PC-3 (cell line): ENCODE measurements at regions of chr1 and their contacts with region 1.

Region 1: DNA sequence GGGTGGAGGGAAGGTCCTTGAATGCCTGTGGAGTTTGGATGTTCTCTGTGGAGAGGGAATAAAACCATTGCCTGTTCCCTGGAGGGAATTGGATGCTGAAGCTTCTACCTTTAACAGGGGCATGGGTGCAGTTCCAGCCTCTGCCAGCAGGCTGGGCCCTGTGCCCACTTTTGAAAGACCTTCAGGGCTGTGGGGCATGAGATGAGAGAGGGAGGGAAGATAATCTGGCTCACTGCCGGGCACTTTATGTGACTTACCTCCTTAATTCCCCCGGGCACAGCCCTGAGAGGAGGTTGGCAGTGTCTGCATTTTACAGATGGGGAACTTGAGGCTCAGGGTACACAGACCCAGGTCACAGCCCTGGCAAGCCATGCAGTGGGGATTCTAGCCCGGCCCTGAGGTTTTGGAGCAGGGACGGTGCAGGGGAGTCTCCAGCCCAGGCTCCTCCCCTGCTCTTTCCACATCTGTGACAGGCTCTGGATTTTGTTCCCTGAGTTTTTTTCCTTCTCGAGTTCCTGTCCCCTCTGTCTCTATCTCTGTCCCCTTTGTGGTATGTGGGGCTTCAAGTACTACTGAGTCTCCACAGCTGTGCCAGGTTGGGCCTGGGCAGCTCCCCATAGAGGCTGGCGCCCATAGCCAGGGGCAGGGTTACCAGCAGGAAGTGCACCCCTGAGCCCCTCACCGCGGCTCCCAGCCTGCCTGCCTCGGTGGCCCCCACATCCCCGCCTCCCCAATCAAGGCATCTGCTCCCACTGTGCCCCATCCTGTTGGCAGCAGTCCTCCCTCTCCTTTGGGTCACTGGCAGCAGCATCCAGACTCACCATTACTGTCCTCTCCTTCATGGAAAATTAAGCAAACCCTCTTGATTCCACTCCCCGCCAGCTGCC is 14.0 kb upstream of the THEMIS2 start:
- DNase-seq: peak; percentile 95
- ATAC-seq: peak; percentile 91
- H3K4me3 ChIP-seq: no peak overlapping the region
- H3K27ac ChIP-seq: no peak overlapping the region
- H3K4me1 ChIP-seq: peaks cover 16% of the 10 kb centered on the region
- H3K27me3 ChIP-seq: no peaks in the 10 kb centered on the region
- CTCF ChIP-seq: peak; percentile 98

Region 2: GRCh38 chr1:27872059-27872801 is 13.9 kb after region 1 on chr1 and contains the start of gene THEMIS2:
- CTCF ChIA-PET with region 1: interaction called, 3 read pairs
- POLR2A ChIA-PET with region 1: no interaction called
- intact Hi-C with region 1: loop called (anchors 1 kb)
- DNase-seq: peak; percentile 23
- ATAC-seq: peak; percentile 42
- H3K4me3 ChIP-seq: peak within 1 kb of the TSS; percentile 67
- H3K27ac ChIP-seq: no peak within 1 kb of the TSS
- H3K4me1 ChIP-seq: peaks cover 12% of the 10 kb centered on the region
- H3K27me3 ChIP-seq: no peaks in the 10 kb centered on the region
- CTCF ChIP-seq: no peak
- total RNA-seq, gene THEMIS2: 5.0 and 5.7 TPM in 2 replicates

Region 3: DNA sequence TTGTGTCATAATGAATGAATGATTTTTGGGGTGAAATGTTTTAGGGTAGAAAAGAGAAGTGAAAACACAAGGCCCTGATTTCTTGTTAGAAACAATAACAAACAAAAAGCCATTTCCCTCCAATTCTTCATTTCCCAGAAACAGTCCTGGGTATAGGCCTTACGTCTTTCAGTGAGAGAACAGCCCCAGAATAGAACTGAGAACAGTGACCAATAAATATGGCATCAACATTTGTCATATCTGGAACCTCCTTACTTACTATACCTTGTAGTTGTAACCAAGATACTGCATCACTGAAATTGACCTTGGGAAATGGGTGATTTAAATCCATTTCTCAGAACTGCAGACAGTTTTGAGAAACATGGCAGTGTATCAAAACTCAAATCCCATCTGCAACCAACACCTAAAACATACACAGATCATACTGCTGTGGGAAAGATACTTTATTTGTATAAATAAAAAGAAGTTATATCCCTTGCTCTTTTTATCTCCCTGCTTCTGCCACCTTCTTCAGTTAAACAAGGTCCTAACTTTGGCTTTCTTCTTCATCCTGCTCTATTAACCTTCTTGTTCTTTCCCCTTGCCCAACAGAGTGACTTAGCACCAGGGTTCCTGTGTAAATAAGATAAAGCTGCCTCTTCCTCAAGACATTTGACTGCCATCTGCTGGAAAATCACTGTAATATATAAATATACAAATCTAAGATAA is 121.0 kb after region 1 on chr1:
- CTCF ChIA-PET with region 1: interaction called, 10 read pairs
- POLR2A ChIA-PET with region 1: no interaction called
- intact Hi-C with region 1: loop called (anchors 2 kb)
- DNase-seq: peak; percentile 75
- ATAC-seq: peak; percentile 87
- H3K4me3 ChIP-seq: no peak overlapping the region
- H3K27ac ChIP-seq: no peak overlapping the region
- H3K4me1 ChIP-seq: no peaks in the 10 kb centered on the region
- H3K27me3 ChIP-seq: no peaks in the 10 kb centered on the region
- CTCF ChIP-seq: peak; percentile 75

Region 4: DNA sequence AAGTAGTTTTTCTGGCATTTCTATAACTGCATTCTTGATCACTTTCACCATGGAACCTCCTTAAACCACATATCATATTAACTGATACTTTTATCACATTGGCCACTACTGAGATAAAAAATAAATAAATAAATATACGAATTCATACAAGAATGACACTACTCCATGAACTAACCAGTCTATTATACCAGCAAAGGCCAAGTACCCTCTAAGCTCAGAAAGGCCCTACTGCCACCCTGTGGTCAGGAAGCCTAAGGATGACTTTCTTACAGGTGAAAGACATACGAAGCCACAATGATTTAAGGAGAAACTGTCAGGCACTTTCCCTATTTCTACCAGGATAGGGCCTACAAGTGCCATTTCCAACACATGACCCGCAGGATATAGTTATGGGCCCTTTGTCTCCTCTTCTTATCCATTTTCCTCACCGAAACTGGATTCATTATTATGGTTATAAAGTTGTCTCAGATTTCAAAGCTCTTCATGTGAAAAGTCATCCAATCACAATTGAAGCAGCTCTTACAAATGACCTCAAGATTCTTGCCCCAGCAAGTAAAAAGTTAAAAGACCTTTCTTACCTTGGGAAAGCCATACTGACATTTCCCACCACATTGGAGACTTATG is 350.6 kb after region 1 on chr1:
- CTCF ChIA-PET with region 1: no interaction called
- POLR2A ChIA-PET with region 1: no interaction called
- intact Hi-C with region 1: loop called (anchors 10 kb)
- DNase-seq: peak; percentile 80
- ATAC-seq: peak; percentile 88
- H3K4me3 ChIP-seq: no peak overlapping the region
- H3K27ac ChIP-seq: no peak overlapping the region
- H3K4me1 ChIP-seq: no peaks in the 10 kb centered on the region
- H3K27me3 ChIP-seq: no peaks in the 10 kb centered on the region
- CTCF ChIP-seq: peak; percentile 91